ENCODE measurements at regions of chr3 and their contacts with region 1.

Region 1: DNA sequence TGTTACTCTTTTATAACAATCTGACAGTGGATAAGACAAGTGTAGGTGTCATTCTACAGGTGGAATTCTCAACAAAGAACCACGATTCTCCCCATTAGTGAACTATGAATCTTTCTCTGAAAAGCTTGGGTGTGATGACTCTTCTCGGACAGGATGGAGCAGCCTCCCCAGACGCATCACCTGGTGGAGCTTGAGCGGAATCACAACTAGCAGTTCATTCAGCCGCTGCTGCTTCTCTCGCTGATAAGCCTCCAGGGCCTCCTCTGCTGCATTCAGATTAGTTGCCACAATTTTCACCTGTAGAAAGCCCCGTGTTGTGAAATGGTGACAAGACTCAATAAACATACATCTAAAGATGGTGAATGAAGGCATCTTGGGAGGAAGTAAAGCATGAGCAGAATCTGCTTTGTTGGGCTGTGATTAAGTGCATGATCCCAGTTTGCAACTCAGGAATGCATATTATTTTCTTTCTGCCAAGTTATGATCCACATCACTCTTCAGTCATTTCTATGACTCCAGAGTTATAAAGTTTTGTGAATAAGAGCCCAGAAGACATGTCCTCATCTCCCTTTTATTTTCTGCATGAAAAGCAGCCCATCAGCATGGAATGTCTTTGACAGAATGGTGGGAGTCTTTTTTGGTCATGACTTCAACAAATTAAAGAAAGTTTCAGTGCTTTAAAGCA is 93.6 kb downstream of the BOC start:
- DNase-seq: no peak
- H3K4me3 ChIP-seq: no peak overlapping the region
- CTCF ChIP-seq: no peak
- POLR2A ChIP-seq: no peak

Region 2: GRCh38 chr3:113167825-113168801 is 136.9 kb before region 1 on chr3:
- intact Hi-C with region 1: no loop called
- DNase-seq: no peak
- H3K4me3 ChIP-seq: no peak overlapping the region
- CTCF ChIP-seq: no peak
- POLR2A ChIP-seq: no peak

Region 3: DNA sequence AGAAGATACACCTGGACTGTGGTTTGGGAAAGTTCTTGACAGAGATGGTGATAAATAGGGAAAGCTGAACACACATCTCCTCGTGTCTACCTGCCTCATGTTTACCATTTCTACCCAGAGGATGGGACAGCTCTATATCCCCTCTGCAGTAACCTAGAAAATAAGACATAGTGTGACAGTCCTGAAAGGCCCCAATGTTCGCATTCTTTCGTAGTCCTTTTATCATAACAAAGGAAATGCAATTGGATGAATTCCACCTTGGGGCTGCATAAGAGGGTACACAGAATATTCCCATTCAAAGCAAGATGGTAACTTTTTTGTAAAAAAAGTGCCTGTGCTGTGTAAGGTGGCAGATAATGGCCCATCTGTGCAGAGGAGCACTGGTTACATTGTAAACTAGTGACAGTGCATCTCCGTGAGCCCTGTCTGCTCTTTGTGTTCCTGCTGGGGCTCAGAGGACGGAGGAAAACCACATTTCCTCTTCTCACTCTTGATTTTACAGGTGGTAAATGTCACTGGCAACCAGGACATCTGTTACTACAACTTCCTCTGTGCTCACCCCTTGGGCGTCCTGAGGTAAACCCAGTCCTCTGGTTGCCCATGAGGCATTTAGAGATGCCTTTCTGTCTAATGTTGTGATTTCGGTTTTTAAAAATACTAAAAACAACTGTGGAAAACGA is 301.7 kb after region 1 on chr3:
- intact Hi-C with region 1: loop called (anchors 5 kb)
- DNase-seq: no peak
- H3K4me3 ChIP-seq: no peak overlapping the region
- CTCF ChIP-seq: no peak
- POLR2A ChIP-seq: no peak